Endothelial cell of umbilical vein (primary cell): ENCODE measurements at regions of chr2 and their contacts with region 1.

Region 1: DNA sequence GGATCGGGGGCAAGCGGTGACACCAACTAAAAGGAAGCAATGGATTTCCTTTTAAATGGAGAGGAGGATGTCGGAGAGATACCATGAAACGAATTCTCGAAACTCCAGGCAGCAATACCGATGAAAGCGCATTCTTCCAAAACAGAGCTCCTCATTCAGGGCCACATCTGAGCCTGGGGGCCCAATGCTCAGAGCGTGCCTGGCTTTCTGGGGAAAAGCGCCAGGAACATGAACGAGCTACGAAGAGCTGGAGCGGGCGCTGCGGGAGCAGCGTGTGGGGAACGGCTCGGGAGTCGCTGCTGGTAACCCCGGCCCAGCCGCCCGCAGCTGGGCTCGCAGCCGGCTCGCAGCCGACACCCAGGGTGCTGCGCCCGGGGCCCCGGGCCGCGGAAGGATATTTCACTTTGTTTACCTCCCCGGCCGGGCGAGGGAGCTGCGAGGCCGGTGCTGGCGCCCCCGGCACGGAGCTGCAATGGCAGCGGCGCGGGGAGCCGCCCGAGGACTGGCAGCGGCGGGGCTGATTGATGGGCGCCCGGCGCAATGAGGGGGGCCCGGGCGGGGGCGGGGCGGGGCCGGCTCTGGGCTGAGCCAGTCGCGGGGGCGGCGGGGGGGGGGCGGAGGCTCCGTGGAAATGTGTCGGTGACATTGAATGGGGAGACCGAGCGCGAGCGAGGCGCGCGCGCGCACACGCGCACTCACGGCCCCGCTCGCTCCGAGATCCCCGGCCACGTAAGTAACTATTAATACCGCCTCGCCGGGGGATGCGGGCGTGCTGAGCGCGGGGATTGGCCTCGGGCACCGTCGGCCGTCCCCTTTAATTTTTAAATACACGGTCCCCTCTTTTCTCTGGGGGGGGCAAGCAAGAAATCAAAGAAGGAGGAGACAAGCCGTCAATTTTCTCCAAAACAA is at the start of gene TRIB2:
- DNase-seq: peak; percentile 85
- H3K4me3 ChIP-seq: peak within 1 kb of the TSS; percentile 80 to 95 (median 82)
- H3K27ac ChIP-seq: peak within 1 kb of the TSS; percentile 89
- H3K4me1 ChIP-seq: peaks cover 30% of the 10 kb centered on the region
- H3K27me3 ChIP-seq: no peaks in the 10 kb centered on the region
- CTCF ChIP-seq: peak in 1 of 2 donors; percentile 1
- POLR2A ChIP-seq: peak; percentile 67
- total RNA-seq, gene TRIB2: 17.6 and 20.5 TPM in 2 replicates

Region 2: DNA sequence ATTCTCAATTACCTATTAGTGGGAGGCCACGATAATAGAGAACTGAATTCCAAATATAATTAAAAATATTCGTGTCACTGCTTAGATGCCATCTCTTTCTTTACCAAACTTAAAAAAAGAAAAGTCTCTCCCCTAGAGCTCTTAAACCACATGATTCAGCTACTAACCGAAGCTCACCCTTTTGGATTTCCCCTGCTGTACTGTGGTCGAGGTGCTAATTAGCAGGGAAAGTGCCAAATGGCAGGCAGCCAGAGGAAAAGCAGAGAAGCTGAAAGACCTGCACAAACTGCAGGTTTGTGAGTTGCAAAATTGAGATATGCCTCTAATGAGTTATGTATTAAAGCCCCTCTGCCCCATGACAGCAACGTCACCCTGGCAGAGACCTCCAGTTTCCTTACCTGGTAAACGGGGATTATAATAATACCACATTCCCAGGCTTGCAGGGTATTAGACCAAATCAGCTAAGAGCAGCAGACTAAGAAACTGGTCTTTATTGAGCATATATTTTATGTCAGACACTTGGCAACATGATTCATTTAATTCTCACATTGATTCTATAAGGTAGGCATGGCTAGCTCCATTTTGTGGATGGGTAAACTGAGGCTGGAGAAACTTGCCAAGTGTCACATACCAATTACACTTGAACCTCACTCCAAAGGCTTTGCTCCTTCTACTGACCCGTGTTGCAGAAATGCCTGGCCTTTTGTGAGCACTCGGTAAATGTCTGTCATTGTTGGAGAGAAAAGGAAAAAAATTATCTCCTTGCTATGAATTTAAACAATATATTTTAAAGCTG is 710.5 kb before region 1 on chr2:
- CTCF ChIA-PET with region 1: interaction called, 7 read pairs
- POLR2A ChIA-PET with region 1: no interaction called
- dilution Hi-C with region 1: no loop called
- intact Hi-C with region 1: loop called (anchors 5 kb)
- DNase-seq: peak; percentile 51
- H3K4me3 ChIP-seq: no peak overlapping the region
- H3K27ac ChIP-seq: peak overlapping the region; percentile 4
- H3K4me1 ChIP-seq: peaks cover 27% of the 10 kb centered on the region
- H3K27me3 ChIP-seq: no peaks in the 10 kb centered on the region
- CTCF ChIP-seq: no peak
- POLR2A ChIP-seq: no peak

Region 3: DNA sequence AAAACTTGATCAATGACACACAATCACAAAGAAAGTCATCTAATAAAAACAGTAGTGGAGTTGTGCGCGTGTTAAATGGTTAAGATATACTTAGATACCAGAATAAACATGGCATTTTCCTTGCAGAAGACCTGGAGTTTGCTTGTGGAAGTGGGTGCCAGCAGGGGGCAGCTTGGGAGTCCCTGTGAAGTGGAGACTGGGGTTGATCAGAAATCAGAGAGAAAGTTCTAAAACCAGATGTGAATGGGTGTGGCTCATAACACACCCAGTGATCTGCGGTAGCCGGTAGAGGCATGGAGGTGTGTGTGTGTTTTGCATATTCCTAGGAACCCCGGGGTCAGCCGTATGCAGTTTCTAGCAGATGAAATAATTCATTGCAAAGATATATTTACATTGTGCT is 299.9 kb before region 1 on chr2:
- CTCF ChIA-PET with region 1: interaction called, 14 read pairs
- POLR2A ChIA-PET with region 1: no interaction called
- dilution Hi-C with region 1: no loop called
- intact Hi-C with region 1: loop called (anchors 1 kb)
- DNase-seq: peak; percentile 57
- H3K4me3 ChIP-seq: no peak overlapping the region
- H3K27ac ChIP-seq: no peak overlapping the region
- H3K4me1 ChIP-seq: peaks cover 3% of the 10 kb centered on the region
- H3K27me3 ChIP-seq: no peaks in the 10 kb centered on the region
- CTCF ChIP-seq: peak; percentile 47 to 62
- POLR2A ChIP-seq: no peak

Region 4: GRCh38 chr2:12560618-12561017 is 155.9 kb before region 1 on chr2:
- CTCF ChIA-PET with region 1: interaction called, 30 read pairs
- POLR2A ChIA-PET with region 1: interaction called, 3 read pairs
- dilution Hi-C with region 1: loop called (anchors 25 kb)
- intact Hi-C with region 1: loop called (anchors 1 kb)
- DNase-seq: no peak
- H3K4me3 ChIP-seq: no peak overlapping the region
- H3K27ac ChIP-seq: no peak overlapping the region
- H3K4me1 ChIP-seq: peaks cover 20% of the 10 kb centered on the region
- H3K27me3 ChIP-seq: no peaks in the 10 kb centered on the region
- CTCF ChIP-seq: no peak
- POLR2A ChIP-seq: no peak

Region 5: DNA sequence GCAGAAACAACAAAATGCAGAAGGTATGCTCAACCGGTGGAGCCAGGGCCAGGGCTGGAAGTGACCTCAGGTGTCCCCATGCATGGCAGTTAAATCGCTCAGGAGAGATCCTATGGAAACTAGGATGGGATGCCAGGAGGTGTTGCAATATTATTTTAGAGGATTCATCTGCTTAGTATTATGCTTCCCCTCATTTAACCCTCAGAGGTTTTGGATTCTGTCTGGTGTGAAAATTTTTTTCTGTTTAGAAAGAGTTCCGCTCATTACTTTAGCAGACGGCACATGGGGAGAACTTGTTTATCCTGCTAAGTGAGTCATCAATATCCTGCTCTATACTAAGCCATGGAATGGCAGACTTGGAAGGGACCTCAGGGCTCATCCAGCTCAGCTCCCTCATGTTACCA is 42.7 kb after region 1 on chr2:
- CTCF ChIA-PET with region 1: no interaction called
- POLR2A ChIA-PET with region 1: no interaction called
- dilution Hi-C with region 1: no loop called
- intact Hi-C with region 1: loop called (anchors 2 kb)
- DNase-seq: peak; percentile 42
- H3K4me3 ChIP-seq: no peak overlapping the region
- H3K27ac ChIP-seq: no peak overlapping the region
- H3K4me1 ChIP-seq: no peaks in the 10 kb centered on the region
- H3K27me3 ChIP-seq: no peaks in the 10 kb centered on the region
- CTCF ChIP-seq: no peak
- POLR2A ChIP-seq: no peak

Region 6: DNA sequence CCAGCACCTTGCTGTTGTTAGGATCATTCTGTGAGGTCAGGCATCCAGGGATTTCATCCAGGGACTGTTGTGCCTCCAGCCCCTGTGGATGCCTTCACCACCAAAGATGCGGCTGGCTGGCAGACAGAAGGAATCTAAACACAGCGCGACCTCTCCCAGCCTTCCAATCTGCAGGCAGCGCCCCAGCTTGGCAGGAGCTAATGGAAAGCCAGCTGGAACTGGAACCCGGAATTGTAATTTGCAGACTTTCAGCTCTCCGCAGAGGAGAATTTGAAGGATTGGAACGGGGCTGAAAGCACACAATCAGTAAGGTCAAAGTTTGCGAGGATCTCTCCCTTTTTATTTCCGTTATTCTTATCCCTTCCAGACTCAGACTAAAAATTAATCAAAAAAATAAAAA is 128.0 kb after region 1 on chr2:
- CTCF ChIA-PET with region 1: no interaction called
- POLR2A ChIA-PET with region 1: no interaction called
- dilution Hi-C with region 1: no loop called
- intact Hi-C with region 1: no loop called
- DNase-seq: no peak
- H3K4me3 ChIP-seq: no peak overlapping the region
- H3K27ac ChIP-seq: no peak overlapping the region
- H3K4me1 ChIP-seq: no peaks in the 10 kb centered on the region
- H3K27me3 ChIP-seq: no peaks in the 10 kb centered on the region
- CTCF ChIP-seq: no peak
- POLR2A ChIP-seq: no peak

Region 7: GRCh38 chr2:12884713-12885282 is 168.3 kb after region 1 on chr2:
- CTCF ChIA-PET with region 1: no interaction called
- POLR2A ChIA-PET with region 1: no interaction called
- dilution Hi-C with region 1: no loop called
- intact Hi-C with region 1: loop called (anchors 1 kb)
- DNase-seq: peak; percentile 59
- H3K4me3 ChIP-seq: no peak overlapping the region
- H3K27ac ChIP-seq: peak overlapping the region; percentile 70
- H3K4me1 ChIP-seq: peaks cover 17% of the 10 kb centered on the region
- H3K27me3 ChIP-seq: no peaks in the 10 kb centered on the region
- CTCF ChIP-seq: no peak
- POLR2A ChIP-seq: no peak